ENCODE measurements at regions of chr6 and their contacts with region 1.

Region 1: DNA sequence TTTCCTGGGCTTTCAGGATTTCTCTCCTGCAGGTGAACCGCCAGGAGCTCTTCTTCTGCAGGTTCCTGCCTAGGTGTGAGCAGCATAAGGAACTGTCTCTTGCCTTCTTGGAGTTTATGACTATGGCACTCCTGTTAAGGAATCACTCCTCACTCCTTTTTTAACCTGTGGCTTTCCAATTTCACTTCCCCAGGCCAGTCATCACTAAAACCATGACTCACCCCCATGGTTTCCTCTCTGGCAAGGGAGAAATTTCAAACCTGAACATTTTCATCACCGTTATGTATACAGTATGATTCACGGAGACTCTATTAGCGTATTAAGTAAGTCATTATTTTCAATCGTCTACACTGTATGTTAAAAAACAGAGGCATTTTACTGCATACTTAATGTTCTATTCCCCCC is 78.2 kb upstream of the ARID1B start:
- DNase-seq: no peak
- ATAC-seq: peak; percentile 45
- H3K4me3 Mint-ChIP-seq: peak overlapping the region; percentile 74
- H3K27ac Mint-ChIP-seq: peak overlapping the region; percentile 92
- H3K4me1 Mint-ChIP-seq: peaks cover 79% of the 10 kb centered on the region
- H3K27me3 Mint-ChIP-seq: no peaks in the 10 kb centered on the region
- CTCF ChIP-seq: no peak

Region 2: DNA sequence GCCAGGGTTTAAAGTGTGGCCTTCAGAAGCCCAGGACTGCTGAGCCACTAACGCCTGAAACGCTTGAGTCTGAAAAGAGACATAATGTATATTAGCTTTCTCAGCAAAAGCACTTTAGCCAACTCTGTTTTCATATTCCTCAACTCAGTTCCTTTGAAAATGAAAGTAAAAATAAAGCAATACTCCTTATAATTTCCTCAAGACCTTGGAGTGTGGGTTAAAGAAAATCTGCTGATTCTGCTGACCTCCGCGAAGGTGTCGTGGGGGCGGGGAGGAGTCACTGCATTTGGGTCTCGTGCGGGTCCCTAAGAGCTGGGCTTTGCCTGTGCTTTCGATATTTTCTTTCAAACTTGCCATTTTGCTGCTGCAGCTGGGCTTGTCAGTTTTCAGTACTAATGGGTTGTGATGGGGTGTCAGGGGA is 64.1 kb before region 1 on chr6:
- CTCF ChIA-PET with region 1: no interaction called
- POLR2A ChIA-PET with region 1: interaction called, 4 read pairs
- intact Hi-C with region 1: loop called (anchors 2 kb)
- DNase-seq: no peak
- ATAC-seq: no peak
- H3K4me3 Mint-ChIP-seq: peak overlapping the region; percentile 79
- H3K27ac Mint-ChIP-seq: peak overlapping the region; percentile 95
- H3K4me1 Mint-ChIP-seq: peaks cover 54% of the 10 kb centered on the region
- H3K27me3 Mint-ChIP-seq: no peaks in the 10 kb centered on the region
- CTCF ChIP-seq: no peak

Region 3: GRCh38 chr6:156676721-156677120 is 22.3 kb before region 1 on chr6:
- CTCF ChIA-PET with region 1: no interaction called
- POLR2A ChIA-PET with region 1: no interaction called
- intact Hi-C with region 1: no loop called
- DNase-seq: no peak
- ATAC-seq: no peak
- H3K4me3 Mint-ChIP-seq: no peak overlapping the region
- H3K27ac Mint-ChIP-seq: no peak overlapping the region
- H3K4me1 Mint-ChIP-seq: peaks cover 27% of the 10 kb centered on the region
- H3K27me3 Mint-ChIP-seq: no peaks in the 10 kb centered on the region
- CTCF ChIP-seq: no peak

Region 4: DNA sequence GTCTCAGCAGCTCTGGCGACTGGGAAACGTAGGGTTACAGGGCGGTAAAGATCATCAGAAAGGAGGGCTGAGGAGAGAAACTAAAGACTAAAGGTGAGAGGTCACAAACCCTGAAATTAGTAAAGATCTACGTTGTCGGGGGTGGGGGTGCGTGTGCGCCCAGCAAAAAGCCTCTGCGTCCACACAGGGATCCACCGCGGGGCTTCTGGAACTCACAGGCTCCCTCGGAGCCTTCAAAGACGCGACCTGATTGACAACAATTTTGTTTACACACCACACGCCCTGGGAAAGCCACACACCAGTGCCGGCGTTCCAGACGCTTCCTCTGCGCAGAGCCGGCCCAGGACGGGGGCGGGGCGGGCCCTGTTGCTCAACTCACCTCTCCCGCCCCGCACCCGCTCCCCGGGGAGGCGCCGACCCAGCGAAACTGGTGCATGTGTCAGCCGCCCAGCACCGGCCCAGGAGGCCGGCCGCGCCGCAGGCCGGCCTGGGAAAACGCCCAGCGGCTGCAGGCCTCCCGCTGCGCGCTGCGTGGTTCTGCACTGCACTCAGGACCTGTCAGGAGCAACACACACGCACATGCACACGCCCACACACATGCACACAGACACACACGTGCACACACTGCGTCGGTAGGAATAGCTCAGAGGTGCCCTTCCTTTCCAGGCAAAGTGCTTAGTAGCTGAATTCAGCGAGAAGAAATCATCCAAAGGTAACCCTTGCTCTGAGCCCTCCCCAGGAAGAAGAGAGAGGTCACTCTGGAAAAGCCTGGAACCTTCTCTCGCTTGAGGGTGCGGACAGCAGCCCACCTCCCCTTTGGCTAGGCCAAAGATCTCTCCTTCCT is 20.9 kb after region 1 on chr6:
- CTCF ChIA-PET with region 1: interaction called, 12 read pairs
- POLR2A ChIA-PET with region 1: interaction called, 65 read pairs
- intact Hi-C with region 1: loop called (anchors 1 kb)
- DNase-seq: peak; percentile 78
- ATAC-seq: peak; percentile 81
- H3K4me3 Mint-ChIP-seq: peak overlapping the region; percentile 82
- H3K27ac Mint-ChIP-seq: peak overlapping the region; percentile 95
- H3K4me1 Mint-ChIP-seq: peaks cover 52% of the 10 kb centered on the region
- H3K27me3 Mint-ChIP-seq: no peaks in the 10 kb centered on the region
- CTCF ChIP-seq: no peak

Region 5: DNA sequence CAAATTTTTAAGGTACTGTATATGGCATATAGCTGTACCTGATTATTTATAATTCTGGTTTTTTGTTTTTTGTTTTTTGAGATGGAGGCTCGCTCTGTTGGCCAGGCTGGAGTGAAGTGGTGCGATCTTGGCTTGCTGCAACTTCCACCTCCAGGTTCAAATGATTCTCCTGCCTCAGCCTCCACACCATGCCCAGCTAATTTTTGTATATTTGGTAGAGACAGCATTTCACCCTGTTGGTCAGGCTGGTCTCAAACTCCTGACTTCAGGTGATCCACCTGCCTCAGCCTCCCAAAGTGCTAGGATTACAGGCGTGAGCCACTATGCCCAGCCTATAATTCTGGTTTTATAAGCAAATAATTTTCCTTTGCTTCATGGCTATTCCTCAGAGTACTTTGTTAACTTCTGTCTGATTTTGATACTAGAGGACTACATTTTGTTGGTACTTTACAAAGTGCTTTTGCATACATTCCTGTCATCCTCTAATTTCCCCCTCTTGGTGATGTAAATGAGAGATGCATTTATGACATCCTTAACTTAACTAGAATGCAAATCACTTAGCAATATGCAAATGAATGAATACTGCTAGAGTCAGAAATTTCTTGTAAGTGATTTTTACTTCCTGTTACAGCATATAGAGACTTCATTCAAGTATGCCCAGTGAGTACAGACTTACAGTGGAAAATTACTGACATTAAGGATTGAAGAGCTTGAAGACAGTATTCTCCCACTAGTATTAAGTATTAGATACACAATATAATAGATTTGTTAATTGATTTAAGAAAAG is 42.5 kb after region 1 on chr6:
- CTCF ChIA-PET with region 1: no interaction called
- POLR2A ChIA-PET with region 1: interaction called, 8 read pairs
- intact Hi-C with region 1: loop called (anchors 1 kb)
- DNase-seq: no peak
- ATAC-seq: peak; percentile 86
- H3K4me3 Mint-ChIP-seq: peak overlapping the region; percentile 24
- H3K27ac Mint-ChIP-seq: peak overlapping the region; percentile 77
- H3K4me1 Mint-ChIP-seq: peaks cover 11% of the 10 kb centered on the region
- H3K27me3 Mint-ChIP-seq: no peaks in the 10 kb centered on the region
- CTCF ChIP-seq: no peak

Region 6: GRCh38 chr6:156767603-156768467 is 68.8 kb after region 1 on chr6:
- CTCF ChIA-PET with region 1: no interaction called
- POLR2A ChIA-PET with region 1: interaction called, 10 read pairs
- intact Hi-C with region 1: no loop called
- DNase-seq: no peak
- ATAC-seq: peak; percentile 91
- H3K4me3 Mint-ChIP-seq: peak overlapping the region; percentile 30
- H3K27ac Mint-ChIP-seq: peak overlapping the region; percentile 84
- H3K4me1 Mint-ChIP-seq: peaks cover 28% of the 10 kb centered on the region
- H3K27me3 Mint-ChIP-seq: no peaks in the 10 kb centered on the region
- CTCF ChIP-seq: no peak

Measured in activated B cell treated with CpG ODN at 0.5 μM for 24 hours (primary cell).